ENCODE measurements at regions of chr2 and their contacts with region 1.

Region 1: DNA sequence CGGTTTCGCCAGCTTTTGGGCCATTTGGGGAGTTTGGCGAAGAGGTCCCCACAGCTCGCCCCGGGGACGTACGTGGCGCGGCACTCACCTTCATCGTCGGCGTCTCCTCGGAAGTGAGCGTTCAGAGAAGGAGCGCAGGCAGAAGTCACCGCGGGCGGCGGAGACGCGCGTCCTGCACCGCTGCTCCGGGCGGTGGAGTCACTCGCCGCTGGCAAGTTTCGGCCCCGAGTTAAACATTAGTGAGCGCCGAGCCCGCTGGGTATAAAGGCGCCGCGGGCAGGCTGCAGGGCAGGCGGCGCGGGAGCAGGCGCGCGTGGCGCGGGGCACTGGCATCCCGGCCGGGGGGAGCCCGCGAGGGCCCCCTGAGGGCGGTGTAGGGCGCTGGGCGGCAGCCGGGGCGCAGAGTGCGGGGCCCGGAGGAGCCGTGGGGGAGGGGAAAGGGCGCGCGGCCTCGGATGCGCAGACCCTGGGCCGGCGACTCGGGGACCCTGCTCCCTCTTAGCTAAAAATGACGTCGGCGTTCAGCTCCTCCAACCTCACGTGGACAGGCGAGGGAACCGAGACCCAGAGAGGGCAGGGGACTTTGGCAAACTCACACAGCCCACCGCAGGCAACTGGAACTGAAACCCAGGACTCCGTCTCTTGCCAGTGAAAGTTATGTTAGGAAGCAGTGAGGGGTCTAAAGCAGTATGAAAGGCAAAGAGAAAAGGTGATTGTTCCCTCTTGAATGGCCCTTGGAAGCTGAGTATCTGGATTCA is at the start of gene DPP4:
- DNase-seq: peak; percentile 22
- ATAC-seq: peak; percentile 24
- H3K4me3 ChIP-seq: peak within 1 kb of the TSS; percentile 61
- H3K27ac ChIP-seq: peak within 1 kb of the TSS; percentile 85
- H3K4me1 ChIP-seq: peaks cover 26% of the 10 kb centered on the region
- H3K27me3 ChIP-seq: no peaks in the 10 kb centered on the region
- CTCF ChIP-seq: no peak
- POLR2A ChIP-seq: no peak
- RAD21 ChIP-seq: 0 out of 2 replicates have a peak, but pooled peaks have one; percentile 15
- total RNA-seq, gene DPP4: 19.0 and 24.2 TPM in 2 replicates

Region 2: DNA sequence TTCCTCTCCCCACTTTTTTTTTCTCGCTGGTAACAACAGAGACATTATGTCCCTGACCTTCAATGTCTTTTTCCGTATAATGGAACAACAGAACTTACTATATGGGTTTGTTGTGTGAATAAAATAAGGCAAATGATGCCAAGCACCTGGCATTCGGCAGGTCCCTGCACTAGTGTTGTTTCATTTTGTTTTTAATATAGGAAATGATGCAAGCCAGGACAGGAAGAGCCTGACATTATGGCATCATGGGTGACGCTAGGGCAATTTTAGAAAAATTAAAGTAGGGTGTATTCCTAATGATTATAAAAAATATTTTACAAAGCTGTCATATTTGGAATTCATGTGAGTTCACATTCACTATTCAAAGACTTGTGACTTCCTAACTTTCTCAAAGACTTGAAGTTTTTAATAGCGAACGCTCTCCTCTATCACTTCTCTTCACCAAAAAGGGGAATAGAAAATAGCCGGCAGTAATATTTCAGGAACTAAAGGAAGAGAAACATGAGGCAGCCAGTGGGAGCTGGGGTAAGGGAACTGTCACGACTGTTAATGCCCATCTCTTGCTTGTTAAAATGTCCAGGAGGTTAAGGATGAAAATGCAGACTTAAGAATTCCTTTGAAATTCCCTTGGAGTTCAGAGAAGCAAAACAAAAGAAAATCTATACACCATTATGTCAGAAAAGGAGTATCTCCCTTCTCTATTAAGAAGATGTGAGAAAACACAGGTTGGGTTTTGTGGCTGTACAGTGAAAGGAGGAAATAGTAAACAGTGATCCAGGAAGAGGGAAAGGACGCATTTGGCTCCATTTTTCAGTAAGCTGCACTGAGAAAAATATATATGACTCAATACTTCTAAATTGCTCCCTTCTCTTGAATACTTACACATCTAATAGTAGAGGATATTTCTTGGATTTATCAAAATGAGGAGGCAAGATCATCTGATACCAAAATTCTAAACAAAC is 60.3 kb before region 1 on chr2:
- CTCF ChIA-PET with region 1: no interaction called
- POLR2A ChIA-PET with region 1: no interaction called
- dilution Hi-C with region 1: no loop called
- in situ Hi-C with region 1: no loop called
- intact Hi-C with region 1: loop called (anchors 5 kb)
- DNase-seq: no peak
- ATAC-seq: no peak
- H3K4me3 ChIP-seq: no peak overlapping the region
- H3K27ac ChIP-seq: no peak overlapping the region
- H3K4me1 ChIP-seq: no peaks in the 10 kb centered on the region
- H3K27me3 ChIP-seq: no peaks in the 10 kb centered on the region
- CTCF ChIP-seq: no peak
- POLR2A ChIP-seq: no peak
- RAD21 ChIP-seq: no peak

Region 3: DNA sequence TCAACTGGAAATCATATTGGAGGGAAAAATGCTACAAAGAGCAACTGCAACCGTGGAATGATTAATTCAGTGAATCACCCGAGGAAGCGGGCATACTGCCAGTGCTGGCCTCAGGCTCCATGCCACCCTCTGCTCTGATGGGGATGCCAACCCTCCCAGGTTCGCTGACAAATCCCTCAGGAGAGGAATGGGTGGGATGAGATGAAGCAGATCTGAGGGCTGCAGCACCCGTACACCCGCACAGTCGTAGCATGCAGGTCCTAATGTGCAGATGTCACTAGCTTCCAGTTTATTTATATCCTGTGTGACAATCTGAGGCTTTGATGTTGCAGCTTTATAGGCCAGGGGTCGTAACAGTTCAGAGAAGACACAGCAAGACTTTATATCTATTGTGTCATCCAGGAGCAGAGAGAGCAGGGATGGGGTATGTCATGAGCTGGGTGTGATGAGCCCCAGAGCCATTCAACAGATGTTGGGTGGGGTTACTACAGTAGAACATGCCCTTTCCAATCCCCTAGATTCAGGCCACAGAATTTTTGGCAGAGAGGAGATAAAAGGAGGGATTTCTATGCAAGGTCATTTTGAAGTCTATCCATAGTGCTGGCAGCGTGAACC is 44.7 kb before region 1 on chr2:
- CTCF ChIA-PET with region 1: no interaction called
- POLR2A ChIA-PET with region 1: no interaction called
- dilution Hi-C with region 1: no loop called
- in situ Hi-C with region 1: no loop called
- intact Hi-C with region 1: loop called (anchors 5 kb)
- DNase-seq: peak; percentile 37
- ATAC-seq: no peak
- H3K4me3 ChIP-seq: no peak overlapping the region
- H3K27ac ChIP-seq: no peak overlapping the region
- H3K4me1 ChIP-seq: peaks cover 16% of the 10 kb centered on the region
- H3K27me3 ChIP-seq: no peaks in the 10 kb centered on the region
- CTCF ChIP-seq: no peak
- POLR2A ChIP-seq: no peak
- RAD21 ChIP-seq: no peak

Region 4: DNA sequence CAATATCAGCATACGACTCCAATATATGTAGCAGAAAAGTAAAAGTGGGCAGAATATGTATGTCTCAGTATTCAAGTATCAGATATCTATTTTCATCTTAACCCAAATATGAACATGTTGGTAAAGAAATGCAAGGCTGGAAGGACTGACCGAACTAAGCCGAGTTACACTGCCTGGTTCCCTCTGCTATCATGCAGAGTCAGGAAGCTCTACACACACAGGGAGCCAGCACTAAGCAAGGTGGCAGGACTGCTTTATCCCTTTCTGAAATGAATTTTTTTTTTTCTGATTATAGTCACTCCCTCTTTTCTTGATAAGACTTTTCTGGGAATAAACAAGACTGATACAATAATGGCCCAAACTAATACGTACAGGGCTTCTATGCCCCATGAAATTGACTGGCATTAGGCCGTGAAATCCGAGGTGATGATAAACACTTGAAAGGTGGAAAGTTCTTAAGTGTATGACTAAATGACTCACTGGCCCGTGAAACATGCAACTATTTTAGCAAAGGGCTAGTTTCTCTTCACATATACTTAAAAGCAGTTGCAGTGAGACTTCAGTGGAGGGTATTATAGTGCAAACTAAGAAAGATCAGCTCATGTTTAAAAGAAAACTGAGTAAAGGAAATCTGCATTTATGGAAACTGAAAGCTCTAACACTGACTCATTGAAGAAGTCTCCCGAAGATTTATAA is 14.9 kb before region 1 on chr2:
- CTCF ChIA-PET with region 1: interaction called, 5 read pairs
- POLR2A ChIA-PET with region 1: interaction called, 3 read pairs
- dilution Hi-C with region 1: no loop called
- in situ Hi-C with region 1: no loop called
- intact Hi-C with region 1: loop called (anchors 1 kb)
- DNase-seq: peak; percentile 42
- ATAC-seq: peak; percentile 51
- H3K4me3 ChIP-seq: no peak overlapping the region
- H3K27ac ChIP-seq: no peak overlapping the region
- H3K4me1 ChIP-seq: peaks cover 3% of the 10 kb centered on the region; the same call in 1 of the 2 replicates
- H3K27me3 ChIP-seq: no peaks in the 10 kb centered on the region
- CTCF ChIP-seq: no peak
- POLR2A ChIP-seq: no peak
- RAD21 ChIP-seq: no peak

Region 5: DNA sequence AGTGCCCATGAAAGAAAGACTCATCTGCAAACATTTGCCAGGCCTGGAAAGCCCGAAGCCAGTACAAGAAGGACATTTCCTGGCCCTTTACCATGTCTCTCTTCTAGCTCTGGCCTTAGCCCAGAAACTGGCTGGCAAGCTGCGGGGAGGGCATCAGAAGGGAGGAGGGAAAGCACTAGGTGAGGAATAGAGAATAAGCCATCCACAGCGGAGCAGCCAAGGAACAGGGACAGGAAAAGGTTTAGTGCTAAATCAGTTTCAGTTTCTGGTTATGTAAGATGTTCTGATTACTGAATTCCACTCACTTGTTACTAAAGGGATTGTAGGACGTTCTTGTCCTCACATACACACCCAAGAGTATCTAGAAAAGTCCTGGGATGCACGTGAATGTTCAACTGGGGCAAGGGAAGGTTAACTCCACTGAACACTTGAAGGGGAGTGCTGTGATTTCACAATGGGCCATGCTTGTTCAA is 44.5 kb after region 1 on chr2:
- CTCF ChIA-PET with region 1: no interaction called
- POLR2A ChIA-PET with region 1: no interaction called
- dilution Hi-C with region 1: no loop called
- in situ Hi-C with region 1: no loop called
- intact Hi-C with region 1: loop called (anchors 2 kb)
- DNase-seq: no peak
- ATAC-seq: no peak; the same call in 1 of the 2 replicates
- H3K4me3 ChIP-seq: no peak overlapping the region
- H3K27ac ChIP-seq: no peak overlapping the region
- H3K4me1 ChIP-seq: peaks cover 4% of the 10 kb centered on the region
- H3K27me3 ChIP-seq: no peaks in the 10 kb centered on the region
- CTCF ChIP-seq: no peak
- POLR2A ChIP-seq: no peak
- RAD21 ChIP-seq: no peak

Region 6: DNA sequence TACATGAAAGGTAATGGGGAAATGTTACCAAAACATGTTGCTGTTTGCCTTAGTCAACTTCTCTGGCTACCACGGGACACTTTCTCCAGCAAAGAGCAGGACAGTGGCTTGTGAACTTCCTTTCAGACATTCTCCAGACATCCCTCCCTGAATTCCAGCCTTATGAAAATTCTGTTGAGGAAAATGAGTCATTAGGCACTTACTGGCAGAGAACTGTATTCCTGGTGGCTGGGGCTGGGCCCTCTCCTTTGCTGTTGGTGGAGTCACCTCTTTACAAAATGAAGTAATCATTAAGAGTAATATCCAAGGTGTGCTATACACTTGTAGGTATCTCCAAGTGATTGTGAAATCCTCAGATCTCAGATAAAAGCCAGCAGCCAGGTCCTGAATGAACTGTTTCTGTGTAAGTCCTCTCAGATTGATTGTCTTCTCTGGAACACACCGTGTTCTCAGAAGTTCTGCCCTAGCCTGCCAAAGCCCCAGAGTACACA is 170.5 kb after region 1 on chr2:
- CTCF ChIA-PET with region 1: no interaction called
- POLR2A ChIA-PET with region 1: no interaction called
- dilution Hi-C with region 1: no loop called
- in situ Hi-C with region 1: no loop called
- intact Hi-C with region 1: loop called (anchors 5 kb)
- DNase-seq: peak; percentile 93
- ATAC-seq: peak; percentile 60
- H3K4me3 ChIP-seq: no peak overlapping the region
- H3K27ac ChIP-seq: peak overlapping the region; percentile 98
- H3K4me1 ChIP-seq: peaks cover 16% of the 10 kb centered on the region
- H3K27me3 ChIP-seq: no peaks in the 10 kb centered on the region
- CTCF ChIP-seq: no peak
- POLR2A ChIP-seq: peak; percentile 68; the same call in 1 of the 2 replicates
- RAD21 ChIP-seq: no peak

Region 7: GRCh38 chr2:162301151-162301804 is 227.2 kb after region 1 on chr2:
- CTCF ChIA-PET with region 1: no interaction called
- POLR2A ChIA-PET with region 1: no interaction called
- dilution Hi-C with region 1: no loop called
- in situ Hi-C with region 1: no loop called
- intact Hi-C with region 1: loop called (anchors 5 kb)
- DNase-seq: peak; percentile 75
- ATAC-seq: peak; percentile 82
- H3K4me3 ChIP-seq: no peak overlapping the region
- H3K27ac ChIP-seq: no peak overlapping the region
- H3K4me1 ChIP-seq: no peaks in the 10 kb centered on the region
- H3K27me3 ChIP-seq: no peaks in the 10 kb centered on the region
- CTCF ChIP-seq: peak; percentile 86
- POLR2A ChIP-seq: no peak
- RAD21 ChIP-seq: peak; percentile 73

Region 8: GRCh38 chr2:162312853-162313252 is 238.8 kb after region 1 on chr2:
- CTCF ChIA-PET with region 1: no interaction called
- POLR2A ChIA-PET with region 1: no interaction called
- dilution Hi-C with region 1: no loop called
- in situ Hi-C with region 1: no loop called
- intact Hi-C with region 1: no loop called
- DNase-seq: no peak
- ATAC-seq: no peak
- H3K4me3 ChIP-seq: no peak overlapping the region
- H3K27ac ChIP-seq: no peak overlapping the region
- H3K4me1 ChIP-seq: no peaks in the 10 kb centered on the region
- H3K27me3 ChIP-seq: no peaks in the 10 kb centered on the region
- CTCF ChIP-seq: no peak
- POLR2A ChIP-seq: no peak
- RAD21 ChIP-seq: no peak

Region 9: DNA sequence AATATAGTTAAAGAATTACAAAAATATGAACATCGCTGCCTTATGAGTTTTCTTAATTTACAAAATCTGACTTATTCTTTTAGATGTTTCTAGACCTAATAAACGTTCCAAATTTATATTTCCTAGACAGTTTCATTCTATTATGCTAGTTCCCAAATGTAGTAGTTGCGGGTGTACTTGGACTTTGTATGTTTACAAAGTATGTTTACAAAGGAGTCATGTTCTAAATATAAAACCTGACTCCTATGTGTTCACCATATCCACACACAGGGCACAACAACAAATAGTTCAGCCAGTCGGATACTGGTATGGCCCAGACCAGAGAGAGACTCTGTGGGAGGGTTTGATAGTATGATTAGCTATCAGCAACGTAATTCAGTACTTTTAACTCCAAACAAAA is 533.8 kb after region 1 on chr2:
- CTCF ChIA-PET with region 1: no interaction called
- POLR2A ChIA-PET with region 1: no interaction called
- dilution Hi-C with region 1: no loop called
- in situ Hi-C with region 1: no loop called
- intact Hi-C with region 1: no loop called
- DNase-seq: no peak
- ATAC-seq: no peak
- H3K4me3 ChIP-seq: no peak overlapping the region
- H3K27ac ChIP-seq: no peak overlapping the region
- H3K4me1 ChIP-seq: no peaks in the 10 kb centered on the region
- H3K27me3 ChIP-seq: no peaks in the 10 kb centered on the region
- CTCF ChIP-seq: no peak
- POLR2A ChIP-seq: no peak
- RAD21 ChIP-seq: no peak

Measured in IMR-90 (cell line).